ENCODE measurements at regions of chr1 and their contacts with region 1.

Region 1: GRCh38 chr1:10032590-10033358 is at the start of gene UBE4B:
- DNase-seq: peak; percentile 100
- H3K4me3 ChIP-seq: peak within 1 kb of the TSS; percentile 67 to 99 (median 96)
- H3K27ac ChIP-seq: peak within 1 kb of the TSS; percentile 79 to 98 (median 96)
- H3K4me1 ChIP-seq: peaks cover 19 to 65% (median 37%) of the 10 kb centered on the region in 6 donors
- H3K27me3 ChIP-seq: no peaks in the 10 kb centered on the region
- CTCF ChIP-seq: peak; percentile 77 to 99 (median 97)
- POLR2A ChIP-seq: peak in 1 of 3 donors; percentile 22
- total RNA-seq, gene UBE4B: 27.0 to 53.8 (median 40.8) TPM

Region 2: DNA sequence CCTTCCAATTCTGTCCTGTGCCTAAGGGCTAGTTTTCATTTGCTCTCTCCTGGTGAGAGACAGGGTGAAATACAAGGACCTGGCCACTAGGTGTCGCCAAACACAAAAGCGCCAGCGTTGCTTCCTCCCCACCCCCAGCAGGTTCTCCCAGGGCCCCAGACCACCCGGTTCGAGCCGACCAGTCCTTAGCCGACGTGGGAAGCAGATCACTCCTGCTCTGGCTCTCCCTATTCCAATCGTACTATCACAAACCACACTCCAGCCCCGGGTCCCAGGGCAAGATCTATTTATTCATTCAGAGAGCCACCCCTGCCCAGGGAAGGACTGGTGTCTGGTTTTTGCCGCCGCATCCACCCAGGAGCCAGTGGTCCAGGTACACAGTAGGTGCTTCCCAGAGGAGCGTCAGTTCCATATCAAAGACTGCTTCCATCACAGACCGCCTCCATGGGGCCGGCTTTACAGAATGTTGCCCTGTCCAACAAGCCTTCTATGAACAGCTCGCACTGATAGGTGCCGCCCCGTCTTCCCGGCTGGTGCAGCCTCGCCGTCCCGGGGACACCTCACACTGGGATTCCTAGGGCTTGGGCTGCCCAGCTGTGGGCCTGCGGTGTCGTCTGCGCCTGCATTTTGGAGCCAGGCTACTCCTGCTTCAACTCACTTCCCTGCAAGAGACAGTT is 157.7 kb before region 1 on chr1:
- intact Hi-C with region 1: loop called (anchors 5 kb)
- DNase-seq: peak; percentile 89
- H3K4me3 ChIP-seq: peak overlapping the region in 1 of 8 donors; percentile 12
- H3K27ac ChIP-seq: peak overlapping the region in 1 of 8 donors; percentile 43
- H3K4me1 ChIP-seq: peaks cover 9 to 34% (median 20%) of the 10 kb centered on the region in 6 donors
- H3K27me3 ChIP-seq: peaks cover 0 to 19% (median 0%) of the 10 kb centered on the region in 7 donors
- CTCF ChIP-seq: peak; percentile 84 to 96 (median 92)
- POLR2A ChIP-seq: no peak

Region 3: DNA sequence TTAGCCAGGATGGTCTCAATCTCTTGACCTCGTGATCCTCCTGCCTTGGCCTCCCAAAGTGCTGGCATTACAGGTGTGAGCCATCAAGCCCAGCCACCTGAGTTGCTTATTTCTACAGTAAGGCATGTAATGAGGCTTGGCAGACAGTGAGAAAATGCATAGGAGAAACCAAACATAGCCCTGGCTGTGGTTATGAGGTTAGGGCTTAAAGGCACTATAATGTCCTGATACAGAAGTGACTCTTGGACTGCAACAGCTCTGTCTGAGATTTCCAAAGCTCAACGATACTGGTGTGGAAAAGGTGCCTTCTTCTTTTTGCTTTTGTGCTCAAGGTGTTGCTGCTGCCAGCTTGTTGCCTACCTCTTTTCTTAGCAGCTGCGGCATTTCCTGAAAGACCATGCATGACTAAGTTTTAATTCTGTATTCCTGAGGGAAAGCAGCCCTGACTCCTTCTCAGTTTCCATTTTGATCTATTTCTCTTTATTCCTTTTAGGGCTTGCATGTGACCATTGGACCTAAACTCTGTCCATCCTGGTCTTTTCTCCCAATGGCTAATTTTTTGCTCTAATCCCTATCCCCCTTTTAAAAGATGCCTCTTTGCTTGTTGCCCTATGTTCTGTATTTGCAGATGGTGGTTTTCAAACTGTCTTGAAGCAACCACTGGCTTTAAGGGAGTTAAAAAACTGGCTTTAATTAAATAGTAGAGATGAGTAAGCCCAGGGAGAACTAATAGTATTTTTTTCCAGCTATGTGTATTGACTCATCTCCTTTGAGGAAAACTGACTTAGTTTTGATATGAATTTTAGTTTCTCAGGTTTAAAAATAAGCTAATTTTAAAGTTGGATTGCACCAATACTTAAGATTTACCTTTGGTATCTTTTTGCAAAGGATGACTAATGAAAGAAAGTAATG is 247.9 kb after region 1 on chr1:
- intact Hi-C with region 1: no loop called
- DNase-seq: no peak
- H3K4me3 ChIP-seq: no peak overlapping the region
- H3K27ac ChIP-seq: no peak overlapping the region
- H3K4me1 ChIP-seq: no peaks in the 10 kb centered on the region
- H3K27me3 ChIP-seq: no peaks in the 10 kb centered on the region
- CTCF ChIP-seq: no peak
- POLR2A ChIP-seq: no peak